ENCODE measurements at regions of chr15 and their contacts with region 1.

Region 1: GRCh38 chr15:34795267-34796081 is at the start of gene ACTC1:
- DNase-seq: peak; percentile 88
- ATAC-seq: peak; percentile 68
- total RNA-seq, gene ACTC1: 14,086 TPM

Region 2: GRCh38 chr15:34708422-34708821 is 87.1 kb before region 1 on chr15:
- intact Hi-C with region 1: loop called (anchors 10 kb)
- DNase-seq: no peak
- ATAC-seq: peak; percentile 80

Region 3: GRCh38 chr15:34725556-34725955 is 69.9 kb before region 1 on chr15:
- intact Hi-C with region 1: no loop called
- DNase-seq: no peak
- ATAC-seq: no peak

Region 4: DNA sequence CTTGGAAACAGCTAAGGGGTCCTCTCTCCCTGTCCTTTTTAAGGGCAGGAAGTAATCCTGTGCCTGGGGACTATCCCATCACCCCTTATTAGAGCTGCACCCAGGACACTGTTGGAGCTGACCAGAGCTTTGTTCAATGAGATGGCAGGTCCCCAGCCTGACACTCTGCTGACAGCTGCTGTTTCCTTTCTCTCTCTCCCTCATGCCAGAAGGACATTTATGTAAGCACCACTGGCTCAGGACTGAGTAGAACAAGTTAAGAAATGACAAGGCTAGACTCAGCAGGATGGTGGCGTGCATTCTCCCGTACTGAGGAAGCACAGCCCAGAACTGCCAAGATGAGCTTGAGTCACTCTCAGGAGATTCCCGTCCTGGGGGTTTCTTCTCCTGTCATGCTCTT is 58.0 kb before region 1 on chr15:
- intact Hi-C with region 1: no loop called
- DNase-seq: peak; percentile 40
- ATAC-seq: peak; percentile 97

Region 5: GRCh38 chr15:34818526-34818925 is 23.1 kb after region 1 on chr15:
- intact Hi-C with region 1: no loop called
- DNase-seq: no peak
- ATAC-seq: no peak